IMR-90 (cell line): ENCODE measurements at regions of chr3 and their contacts with region 1.

Region 1: GRCh38 chr3:17645072-17645698 is 97.2 kb downstream of the TBC1D5 start:
- DNase-seq: peak; percentile 76
- ATAC-seq: peak; percentile 77
- H3K4me3 ChIP-seq: no peak overlapping the region
- H3K27ac ChIP-seq: no peak overlapping the region
- H3K4me1 ChIP-seq: peaks cover 1% of the 10 kb centered on the region
- H3K27me3 ChIP-seq: no peaks in the 10 kb centered on the region
- CTCF ChIP-seq: peak; percentile 72
- POLR2A ChIP-seq: no peak
- RAD21 ChIP-seq: peak; percentile 59

Region 2: GRCh38 chr3:17384567-17385296 is 260.5 kb before region 1 on chr3:
- CTCF ChIA-PET with region 1: no interaction called
- POLR2A ChIA-PET with region 1: no interaction called
- dilution Hi-C with region 1: no loop called
- in situ Hi-C with region 1: no loop called
- intact Hi-C with region 1: no loop called
- DNase-seq: peak; percentile 6
- ATAC-seq: no peak
- H3K4me3 ChIP-seq: no peak overlapping the region
- H3K27ac ChIP-seq: no peak overlapping the region
- H3K4me1 ChIP-seq: no peaks in the 10 kb centered on the region
- H3K27me3 ChIP-seq: no peaks in the 10 kb centered on the region
- CTCF ChIP-seq: no peak
- POLR2A ChIP-seq: no peak
- RAD21 ChIP-seq: no peak

Region 3: GRCh38 chr3:17831366-17831765 is 186.2 kb after region 1 on chr3:
- CTCF ChIA-PET with region 1: interaction called, 4 read pairs
- POLR2A ChIA-PET with region 1: no interaction called
- dilution Hi-C with region 1: no loop called
- in situ Hi-C with region 1: loop called (anchors 10 kb)
- intact Hi-C with region 1: no loop called
- DNase-seq: peak; percentile 9
- ATAC-seq: no peak
- H3K4me3 ChIP-seq: no peak overlapping the region
- H3K27ac ChIP-seq: no peak overlapping the region
- H3K4me1 ChIP-seq: no peaks in the 10 kb centered on the region
- H3K27me3 ChIP-seq: no peaks in the 10 kb centered on the region; the same call in 1 of the 2 replicates
- CTCF ChIP-seq: no peak
- POLR2A ChIP-seq: no peak
- RAD21 ChIP-seq: no peak

Region 4: GRCh38 chr3:18111796-18112232 is 466.6 kb after region 1 on chr3:
- CTCF ChIA-PET with region 1: no interaction called
- POLR2A ChIA-PET with region 1: no interaction called
- dilution Hi-C with region 1: no loop called
- in situ Hi-C with region 1: loop called (anchors 25 kb)
- intact Hi-C with region 1: no loop called
- DNase-seq: peak; percentile 29
- ATAC-seq: peak; percentile 79
- H3K4me3 ChIP-seq: no peak overlapping the region
- H3K27ac ChIP-seq: no peak overlapping the region
- H3K4me1 ChIP-seq: no peaks in the 10 kb centered on the region
- H3K27me3 ChIP-seq: no peaks in the 10 kb centered on the region
- CTCF ChIP-seq: no peak
- POLR2A ChIP-seq: no peak
- RAD21 ChIP-seq: no peak